ENCODE measurements at regions of chr2 and their contacts with region 1.

Region 1: GRCh38 chr2:126657636-126658318 is 1.8 kb downstream of the GYPC start:
- DNase-seq: peak; percentile 93

Region 2: GRCh38 chr2:126527836-126528507 is 129.8 kb before region 1 on chr2:
- intact Hi-C with region 1: loop called (anchors 5 kb)
- DNase-seq: no peak

Region 3: DNA sequence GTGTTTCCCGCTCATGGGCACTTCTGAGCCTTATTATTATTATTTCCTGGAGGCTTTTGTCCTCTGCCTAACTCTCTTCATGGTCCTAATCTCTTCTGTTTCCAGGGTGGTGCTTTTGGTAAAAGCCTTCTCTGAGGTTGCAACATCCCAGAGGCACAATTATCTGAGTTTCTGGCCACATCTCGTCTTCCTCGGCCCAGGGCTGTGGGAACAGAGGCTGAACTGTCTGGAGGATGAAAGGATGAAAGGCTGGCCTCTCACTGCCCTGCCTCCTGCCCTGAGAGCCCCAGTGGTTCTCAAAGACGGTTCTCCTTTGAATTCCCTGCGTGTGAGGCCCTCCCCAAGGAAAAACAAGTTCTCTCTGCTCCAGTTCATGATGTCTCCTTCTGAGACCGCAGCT is 12.0 kb after region 1 on chr2:
- intact Hi-C with region 1: no loop called
- DNase-seq: no peak

Region 4: DNA sequence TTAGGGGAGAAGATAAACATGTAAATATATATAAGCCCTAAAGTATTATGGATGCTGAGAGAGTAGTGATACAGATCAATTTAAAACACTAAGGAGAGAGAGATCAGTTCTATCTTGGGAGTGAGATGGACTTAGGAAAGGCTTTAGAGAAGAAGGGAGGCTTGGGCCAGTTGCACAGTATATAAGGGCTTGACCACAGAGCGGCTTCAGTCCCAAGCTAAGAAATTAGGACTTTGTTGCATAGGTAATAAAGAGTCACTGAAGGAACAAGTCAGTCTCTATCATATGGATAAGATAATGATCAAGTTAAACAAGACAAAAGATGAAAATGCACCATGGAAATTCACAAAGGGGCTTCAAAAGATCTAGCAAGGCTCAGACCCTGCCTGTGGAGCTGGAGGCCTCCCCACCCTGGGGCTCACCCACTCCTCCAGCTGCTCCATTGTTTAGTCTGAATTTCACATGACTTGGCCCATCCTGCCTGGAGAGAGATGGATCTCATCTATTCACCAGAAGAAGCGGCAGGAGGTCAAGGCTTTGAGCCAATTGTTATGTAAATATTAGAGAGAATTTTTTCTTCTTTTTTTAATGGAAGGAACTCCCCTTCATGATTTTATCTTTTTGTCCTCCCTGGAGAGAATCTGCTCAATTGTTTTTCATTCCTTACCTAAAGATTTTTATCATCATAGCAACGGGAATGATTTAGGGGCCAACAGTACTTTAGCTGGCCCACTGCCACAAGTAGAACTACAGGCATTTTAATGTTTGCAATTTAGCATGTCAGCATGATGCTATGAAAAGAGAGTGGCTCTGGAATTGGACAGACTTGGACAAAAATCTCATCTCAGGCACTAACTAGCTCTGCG is 42.2 kb after region 1 on chr2:
- intact Hi-C with region 1: loop called (anchors 5 kb)
- DNase-seq: no peak

Region 5: GRCh38 chr2:126971481-126972278 is 313.9 kb after region 1 on chr2:
- intact Hi-C with region 1: no loop called
- DNase-seq: no peak